Heart right ventricle (tissue), 16 donors: ENCODE measurements at regions of chr2 and their contacts with region 1.

Region 1: DNA sequence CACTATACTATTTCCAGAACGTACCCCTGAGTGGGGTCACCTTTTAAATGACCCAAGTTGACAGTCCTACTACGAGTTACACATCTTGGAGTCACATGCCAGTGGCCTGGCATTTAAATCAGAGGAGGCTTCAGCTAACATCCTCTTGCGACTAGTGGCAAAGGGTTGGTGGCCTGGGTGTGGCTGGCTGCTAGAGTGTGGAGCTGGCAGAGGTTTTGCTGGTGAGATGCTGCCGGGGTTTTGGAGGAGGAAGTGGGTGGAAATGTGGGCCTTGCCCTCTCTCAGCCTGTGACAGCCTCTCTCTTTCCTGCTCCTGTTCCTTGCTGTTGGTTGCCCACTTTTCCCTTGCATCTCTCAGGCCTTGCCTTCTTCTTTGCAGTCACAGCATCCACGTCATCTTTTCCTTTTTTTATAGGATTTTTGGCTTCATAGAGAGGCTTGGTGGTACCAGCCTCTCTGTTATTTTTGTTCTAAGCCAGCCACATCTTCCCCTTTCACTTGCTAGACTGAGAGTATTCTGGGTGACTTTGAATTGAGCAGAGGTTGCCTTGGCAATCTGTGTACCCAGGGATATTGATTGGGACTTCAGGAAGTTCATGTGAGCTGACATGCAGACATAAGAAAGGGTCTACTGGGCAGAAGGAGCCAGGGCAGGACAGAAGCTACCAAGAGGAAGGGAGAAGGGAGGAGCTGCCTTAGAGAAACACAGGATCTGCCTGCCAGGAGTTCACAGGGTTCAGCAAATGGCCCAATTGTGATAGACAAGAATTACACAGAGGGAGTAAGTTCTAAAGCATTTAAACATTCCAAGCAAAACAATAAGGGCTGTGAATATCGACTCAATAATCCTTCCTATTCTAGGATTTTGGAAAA is 55.4 kb downstream of the CDC42EP3 start:
- DNase-seq: peak in 1 of 2 donors; percentile 40
- ATAC-seq: peak in 7 of 8 donors; percentile 23 to 71 (median 50)
- H3K4me3 ChIP-seq: no peak overlapping the region
- H3K27ac ChIP-seq: peak overlapping the region in 4 of 10 donors; percentile 14 to 73 (median 40)
- H3K4me1 ChIP-seq: peaks cover 4 to 49% (median 29%) of the 10 kb centered on the region in 9 donors
- H3K27me3 ChIP-seq: no peaks in the 10 kb centered on the region
- CTCF ChIP-seq: no peak

Region 2: GRCh38 chr2:37561615-37562569 is 54.1 kb before region 1 on chr2:
- intact Hi-C with region 1: no loop called
- DNase-seq: no peak
- ATAC-seq: peak in 5 of 8 donors; percentile 34 to 67 (median 54)
- H3K4me3 ChIP-seq: no peak overlapping the region
- H3K27ac ChIP-seq: peak overlapping the region in 1 of 10 donors; percentile 48
- H3K4me1 ChIP-seq: peaks cover 0 to 60% (median 14%) of the 10 kb centered on the region in 9 donors
- H3K27me3 ChIP-seq: no peaks in the 10 kb centered on the region
- CTCF ChIP-seq: no peak

Region 3: DNA sequence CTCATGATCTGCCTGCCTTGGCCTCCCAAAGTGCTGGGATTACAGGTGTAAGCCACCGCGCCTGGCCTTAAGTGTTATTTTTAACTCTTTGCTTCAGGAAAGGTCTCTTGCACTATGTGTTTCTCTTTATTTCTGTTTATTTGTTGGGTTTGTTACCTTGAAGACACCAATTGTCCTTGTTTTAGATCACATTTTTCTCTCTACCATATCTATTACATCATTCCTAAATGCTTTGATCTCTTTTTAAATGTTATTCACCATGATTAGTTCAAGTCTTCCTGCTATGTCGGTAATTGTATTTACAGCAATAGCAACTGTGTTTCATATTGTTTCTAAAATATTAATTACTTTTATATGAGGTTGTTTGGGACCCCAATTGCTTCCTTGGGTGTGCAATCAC is 22.3 kb before region 1 on chr2:
- intact Hi-C with region 1: loop called in 1 of 10 experiments (anchors 2 kb)
- DNase-seq: no peak
- ATAC-seq: no peak
- H3K4me3 ChIP-seq: no peak overlapping the region
- H3K27ac ChIP-seq: no peak overlapping the region
- H3K4me1 ChIP-seq: peaks cover 0 to 17% (median 0%) of the 10 kb centered on the region in 9 donors
- H3K27me3 ChIP-seq: no peaks in the 10 kb centered on the region
- CTCF ChIP-seq: no peak